ENCODE measurements at regions of chr1 and their contacts with region 1.

Region 1: GRCh38 chr1:226940029-226940805 is at the start of gene COQ8A:
- DNase-seq: peak; percentile 98 to 100 (median 100)

Region 2: DNA sequence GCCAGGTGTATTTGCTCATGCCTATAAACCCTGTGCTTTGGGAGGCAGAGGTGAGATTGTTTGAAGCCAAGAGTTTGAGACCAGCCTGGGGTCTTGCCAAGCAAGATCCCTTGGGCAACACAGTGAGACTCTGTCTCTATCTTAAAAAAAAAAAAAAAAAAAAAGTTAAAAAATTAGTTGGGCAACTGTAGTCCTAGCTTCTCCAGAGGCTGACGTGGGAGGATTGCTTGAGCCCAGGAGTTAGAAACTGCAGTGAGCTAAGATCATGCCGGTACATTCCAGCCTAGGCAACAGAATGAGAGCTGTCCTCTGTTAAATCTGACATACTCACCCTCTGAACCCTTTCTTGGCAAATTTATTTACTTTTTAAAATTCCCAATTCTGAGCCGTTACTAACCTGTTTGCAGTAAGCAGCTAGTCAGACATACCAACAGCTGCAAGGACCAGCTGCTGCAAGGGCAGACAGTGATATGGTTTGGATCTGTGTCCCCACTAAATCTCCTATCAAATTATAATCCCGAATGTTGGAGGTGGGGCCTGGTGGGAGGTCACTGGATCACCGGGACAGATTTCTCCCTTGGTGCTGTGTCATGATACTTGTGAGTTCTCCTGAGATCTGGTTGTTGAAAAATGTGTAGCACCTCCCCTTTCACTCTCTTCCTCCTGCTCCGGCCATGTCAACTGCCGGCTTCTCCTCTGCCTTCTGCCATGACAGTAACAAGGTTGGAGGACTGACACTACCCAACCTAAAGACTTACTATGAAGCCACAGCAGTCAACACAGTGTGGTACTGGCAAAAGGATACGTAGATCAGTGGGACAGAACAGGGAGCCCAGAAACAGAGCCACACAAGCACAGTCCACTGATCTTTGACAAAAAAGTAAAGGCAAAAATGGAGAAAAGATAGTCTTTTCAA is 542.9 kb before region 1 on chr1:
- intact Hi-C with region 1: no loop called
- DNase-seq: no peak

Region 3: DNA sequence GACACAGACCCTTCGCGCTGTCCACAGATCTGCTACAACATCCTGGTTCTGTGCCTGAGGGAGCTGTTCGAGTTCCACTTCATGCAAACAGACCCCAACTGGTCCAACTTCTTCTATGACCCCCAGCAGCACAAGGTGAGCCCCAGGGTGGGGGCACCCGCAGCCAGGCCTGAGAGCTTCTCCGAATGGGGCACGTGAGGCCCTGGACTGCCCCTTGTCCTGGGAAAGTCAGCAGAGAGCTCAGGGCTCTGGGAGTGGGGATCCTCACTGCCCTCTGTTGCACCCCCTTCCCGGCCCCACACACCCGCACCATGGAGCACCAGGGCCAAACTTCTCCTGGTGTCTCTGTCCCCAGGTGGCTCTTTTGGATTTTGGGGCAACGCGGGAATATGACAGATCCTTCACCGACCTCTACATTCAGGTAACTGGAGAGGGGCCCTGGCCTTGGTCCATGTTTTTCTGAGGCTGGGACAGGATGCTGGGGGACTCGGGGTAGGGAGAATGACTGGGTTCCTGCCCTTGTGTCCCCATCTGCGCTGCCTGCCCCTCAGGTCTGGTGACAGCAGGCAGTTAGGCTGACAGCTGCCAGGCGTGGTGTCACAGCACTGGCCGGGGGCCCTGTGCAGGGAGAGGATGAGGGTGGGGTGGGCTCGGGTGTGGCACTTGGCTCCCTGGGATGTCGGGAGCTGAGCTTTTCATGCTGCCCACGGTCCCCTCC is 44.5 kb after region 1 on chr1:
- intact Hi-C with region 1: loop called (anchors 5 kb)
- DNase-seq: peak in 8 of 42 donors; percentile 4 to 41 (median 28)